ENCODE measurements at regions of chr11 and their contacts with region 1.

Region 1: GRCh38 chr11:78416305-78417178 is 1.1 kb downstream of the GAB2 start:
- DNase-seq: peak; percentile 81
- ATAC-seq: peak; percentile 56
- H3K4me3 Mint-ChIP-seq: peak overlapping the region; percentile 93
- H3K27ac Mint-ChIP-seq: peak overlapping the region; percentile 7
- H3K4me1 Mint-ChIP-seq: peaks cover 34% of the 10 kb centered on the region
- H3K27me3 Mint-ChIP-seq: peaks cover 26% of the 10 kb centered on the region
- CTCF ChIP-seq: peak; percentile 30; the same call in 1 of the 2 replicates

Region 2: DNA sequence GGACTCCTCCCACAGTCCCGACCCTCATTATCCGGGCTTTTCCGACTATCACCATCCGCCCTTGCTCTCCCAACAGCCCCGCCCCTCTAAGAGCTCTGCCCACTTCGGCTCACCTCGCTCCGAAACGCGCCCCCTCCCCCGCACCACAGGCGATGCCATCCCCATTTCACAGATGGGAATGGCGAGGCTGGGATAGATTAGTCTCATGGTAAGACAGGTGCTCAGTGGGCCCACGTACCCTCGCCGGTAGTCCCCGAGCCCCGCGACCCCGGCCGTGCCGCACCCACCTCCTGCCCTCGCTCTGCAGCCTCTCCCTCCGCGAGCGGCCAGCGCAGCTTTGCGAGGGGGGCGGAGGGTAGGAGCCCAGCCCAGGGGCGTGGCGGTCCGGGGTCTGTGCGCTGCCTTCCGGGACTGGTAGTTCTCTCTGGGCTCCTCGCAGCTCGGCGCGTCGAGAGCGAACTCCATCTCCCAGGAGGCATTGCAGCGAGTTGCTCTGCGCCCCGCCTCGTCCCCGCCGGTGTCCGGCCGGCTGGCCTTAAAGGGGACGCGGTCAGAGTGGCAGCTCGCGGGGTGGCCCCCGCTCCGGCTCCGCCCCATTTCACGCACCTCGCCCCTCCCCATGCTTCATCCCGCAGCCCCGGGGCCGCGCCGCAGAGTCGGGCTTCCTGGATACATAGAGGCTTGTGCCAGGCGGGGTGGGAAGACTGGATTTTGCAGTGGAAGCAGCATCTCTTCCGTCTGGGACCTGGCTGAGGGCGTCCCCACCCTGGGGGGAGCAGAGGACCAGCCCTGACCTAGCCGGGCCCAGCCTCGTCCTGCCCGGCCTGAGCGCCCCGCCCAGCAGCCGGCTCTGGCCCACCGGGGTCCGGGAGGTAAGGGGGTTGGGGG is 228.0 kb before region 1 on chr11 and contains the starts of genes KCTD21 and USP35:
- CTCF ChIA-PET with region 1: interaction called, 11 read pairs
- POLR2A ChIA-PET with region 1: interaction called, 3 read pairs
- DNase-seq: peak; percentile 97
- ATAC-seq: peak; percentile 95
- H3K4me3 Mint-ChIP-seq: peak within 1 kb of the TSS; percentile 91
- H3K27ac Mint-ChIP-seq: no peak within 1 kb of the TSS; the same call in 1 of the 2 replicates
- H3K4me1 Mint-ChIP-seq: peaks cover 23% of the 10 kb centered on the region
- H3K27me3 Mint-ChIP-seq: no peaks in the 10 kb centered on the region; the same call in 1 of the 2 replicates
- CTCF ChIP-seq: no peak
- total RNA-seq, gene KCTD21: 2.8 to 4.0 TPM (median 3.1 TPM) in 3 replicates
- total RNA-seq, gene USP35: 9.1 to 10.6 TPM (median 9.6 TPM) in 3 replicates

Region 3: DNA sequence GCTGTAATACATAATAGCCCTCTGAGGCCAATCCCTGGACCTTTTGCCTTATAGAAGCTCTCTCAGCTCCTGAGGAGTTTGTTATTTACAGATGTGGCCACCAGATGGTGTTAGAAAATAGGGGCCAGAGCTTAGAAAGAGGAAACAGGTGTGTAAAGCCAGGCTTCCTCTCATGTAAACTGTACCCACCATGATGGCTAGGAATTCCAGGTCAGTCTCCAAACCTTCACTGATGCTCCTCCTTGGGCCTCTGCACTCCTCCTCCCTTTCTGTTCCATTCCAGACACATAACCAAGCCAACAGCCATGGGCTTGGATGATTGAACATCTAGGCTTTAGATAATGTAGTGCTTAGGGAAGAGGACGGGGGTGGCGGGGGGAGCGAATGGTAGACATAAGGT is 188.1 kb before region 1 on chr11:
- CTCF ChIA-PET with region 1: interaction called, 33 read pairs
- POLR2A ChIA-PET with region 1: interaction called, 8 read pairs
- DNase-seq: no peak
- ATAC-seq: peak; percentile 96
- H3K4me3 Mint-ChIP-seq: no peak overlapping the region
- H3K27ac Mint-ChIP-seq: no peak overlapping the region
- H3K4me1 Mint-ChIP-seq: no peaks in the 10 kb centered on the region
- H3K27me3 Mint-ChIP-seq: no peaks in the 10 kb centered on the region
- CTCF ChIP-seq: no peak

Region 4: GRCh38 chr11:78365381-78365792 is 51.2 kb before region 1 on chr11:
- CTCF ChIA-PET with region 1: no interaction called
- POLR2A ChIA-PET with region 1: no interaction called
- DNase-seq: peak; percentile 67
- ATAC-seq: peak; percentile 99
- H3K4me3 Mint-ChIP-seq: no peak overlapping the region
- H3K27ac Mint-ChIP-seq: peak overlapping the region; percentile 81
- H3K4me1 Mint-ChIP-seq: peaks cover 27% of the 10 kb centered on the region
- H3K27me3 Mint-ChIP-seq: no peaks in the 10 kb centered on the region
- CTCF ChIP-seq: no peak

Region 5: DNA sequence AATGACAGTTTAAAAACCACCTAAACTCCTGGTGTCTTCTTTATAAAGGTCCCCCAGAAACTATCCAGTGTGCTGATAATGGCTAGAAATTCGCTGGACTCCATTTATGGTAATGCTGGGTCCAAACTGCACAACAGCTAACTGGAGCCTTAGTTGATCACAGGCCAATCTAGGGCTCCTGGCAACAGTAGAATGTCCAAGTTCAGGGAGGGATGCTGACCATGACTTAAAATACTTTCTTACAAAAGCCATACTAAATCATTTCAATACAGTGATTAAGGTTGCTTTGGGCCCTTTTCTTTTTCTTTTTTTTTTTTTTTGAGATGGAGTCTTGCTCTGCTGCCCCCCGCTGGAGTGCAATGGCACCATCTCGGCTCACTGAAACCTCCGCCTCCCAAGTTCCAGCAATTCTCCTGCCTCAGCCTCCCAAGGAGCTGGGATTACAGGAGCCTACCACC is 15.5 kb after region 1 on chr11:
- CTCF ChIA-PET with region 1: interaction called, 12 read pairs
- POLR2A ChIA-PET with region 1: no interaction called
- DNase-seq: peak; percentile 42
- ATAC-seq: peak; percentile 41; the same call in 1 of the 2 replicates
- H3K4me3 Mint-ChIP-seq: no peak overlapping the region
- H3K27ac Mint-ChIP-seq: no peak overlapping the region
- H3K4me1 Mint-ChIP-seq: peaks cover 14% of the 10 kb centered on the region
- H3K27me3 Mint-ChIP-seq: no peaks in the 10 kb centered on the region
- CTCF ChIP-seq: no peak

Region 6: DNA sequence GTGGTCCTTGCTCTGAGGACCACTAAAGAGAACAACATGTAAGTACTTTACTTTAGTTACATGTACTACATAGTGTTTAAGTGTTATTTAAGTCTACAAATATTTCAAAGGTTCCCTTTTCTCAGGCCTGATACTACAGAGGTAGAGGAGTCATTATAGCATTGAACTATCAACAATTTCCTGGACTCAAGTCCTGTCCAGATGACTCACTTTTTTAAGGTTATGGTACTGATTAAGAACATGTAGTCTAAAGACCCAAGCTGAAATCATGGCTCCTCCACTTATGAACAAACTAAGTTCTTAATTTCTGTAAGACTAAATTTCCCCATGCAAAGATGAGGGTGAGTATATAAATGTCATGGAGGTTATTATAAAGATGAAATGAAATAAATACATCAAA is 83.4 kb after region 1 on chr11:
- CTCF ChIA-PET with region 1: no interaction called
- POLR2A ChIA-PET with region 1: no interaction called
- DNase-seq: no peak
- ATAC-seq: no peak
- H3K4me3 Mint-ChIP-seq: no peak overlapping the region
- H3K27ac Mint-ChIP-seq: no peak overlapping the region
- H3K4me1 Mint-ChIP-seq: peaks cover 17% of the 10 kb centered on the region
- H3K27me3 Mint-ChIP-seq: no peaks in the 10 kb centered on the region
- CTCF ChIP-seq: no peak

Region 7: GRCh38 chr11:78564490-78565467 is 148.2 kb after region 1 on chr11:
- CTCF ChIA-PET with region 1: interaction called, 20 read pairs
- POLR2A ChIA-PET with region 1: no interaction called
- DNase-seq: no peak
- ATAC-seq: peak; percentile 24; the same call in 1 of the 2 replicates
- H3K4me3 Mint-ChIP-seq: no peak overlapping the region
- H3K27ac Mint-ChIP-seq: peak overlapping the region; percentile 1; the same call in 1 of the 2 replicates
- H3K4me1 Mint-ChIP-seq: peaks cover 25% of the 10 kb centered on the region
- H3K27me3 Mint-ChIP-seq: no peaks in the 10 kb centered on the region
- CTCF ChIP-seq: peak; percentile 51

Measured in WTC11 (cell line).